Breast epithelium (tissue), 4 donors: ENCODE measurements at regions of chr4 and their contacts with region 1.

Region 1: DNA sequence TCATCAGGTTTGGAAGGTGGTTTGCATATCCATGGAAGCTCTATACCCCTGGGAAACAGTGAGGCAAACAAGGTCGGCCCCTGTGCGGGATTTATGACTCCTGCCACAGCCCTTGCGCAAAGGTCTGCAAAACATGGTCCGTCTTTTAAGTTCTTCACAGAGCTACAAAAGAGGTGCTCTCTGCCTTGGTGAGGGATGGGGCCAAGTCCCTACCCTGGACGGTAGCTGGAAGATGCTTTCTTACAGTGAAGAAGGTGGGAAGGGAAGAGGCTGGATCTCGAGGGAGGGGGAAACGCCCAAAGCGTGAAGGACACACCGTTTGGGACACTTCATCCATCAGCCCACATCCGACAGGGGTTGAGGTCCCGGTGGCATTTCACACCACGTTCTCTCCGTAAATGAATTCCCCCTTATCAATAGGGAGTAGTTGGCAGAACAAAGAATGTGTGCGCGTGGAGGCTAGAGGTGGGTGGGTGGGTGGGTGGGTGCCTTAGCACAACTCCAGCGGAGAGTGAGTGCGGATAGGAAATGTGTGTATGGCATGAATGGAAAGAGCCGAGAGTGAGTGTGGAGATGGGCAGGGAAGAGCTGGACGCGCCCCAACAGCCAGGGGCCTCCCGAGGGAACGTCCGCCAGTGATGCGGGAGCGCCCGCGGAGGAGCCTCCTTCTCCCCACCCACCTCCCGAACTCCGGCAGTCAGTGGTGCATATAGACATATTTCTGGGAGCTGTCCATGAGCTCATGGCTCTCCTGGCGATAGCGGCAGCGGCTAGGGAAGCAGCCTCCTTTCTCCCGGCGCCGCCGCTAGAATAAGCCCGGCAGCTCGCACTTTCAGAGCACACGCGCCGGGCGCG is 68.3 kb downstream of the LARP7 start:
- DNase-seq: peak; percentile 22 to 57
- H3K4me3 ChIP-seq: peak overlapping the region; percentile 56 to 70 (median 58)
- H3K27ac ChIP-seq: no peak overlapping the region
- H3K4me1 ChIP-seq: peaks cover 0 to 6% of the 10 kb centered on the region in 2 donors
- H3K27me3 ChIP-seq: peaks cover 3 to 14% of the 10 kb centered on the region in 2 donors
- CTCF ChIP-seq: no peak
- POLR2A ChIP-seq: no peak

Region 2: DNA sequence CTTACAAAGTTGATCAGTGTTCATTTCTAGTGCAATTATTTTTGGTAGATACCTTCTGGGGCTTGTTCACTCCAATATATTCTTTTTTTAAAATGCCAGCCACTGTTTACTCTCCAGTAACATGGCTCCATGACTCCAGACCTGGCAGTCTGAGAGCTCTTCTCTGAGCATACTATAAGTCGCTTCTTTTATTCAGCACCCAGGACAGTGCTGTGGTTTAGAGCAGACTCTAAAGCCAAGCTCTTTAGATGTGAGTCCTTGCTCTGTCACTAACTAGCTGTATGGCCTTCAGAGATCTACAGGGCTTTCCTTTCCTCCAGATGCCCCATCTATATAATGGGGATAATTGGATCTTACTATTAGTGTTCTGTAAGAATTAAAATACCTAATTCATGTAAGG is 760.2 kb before region 1 on chr4:
- intact Hi-C with region 1: loop called (anchors 5 kb)
- DNase-seq: no peak
- H3K4me3 ChIP-seq: no peak overlapping the region
- H3K27ac ChIP-seq: no peak overlapping the region
- H3K4me1 ChIP-seq: no peaks in the 10 kb centered on the region
- H3K27me3 ChIP-seq: no peaks in the 10 kb centered on the region
- CTCF ChIP-seq: no peak
- POLR2A ChIP-seq: no peak